ENCODE measurements at regions of chr11 and their contacts with region 1.

Region 1: GRCh38 chr11:107648242-107648641 is 57.3 kb downstream of the ELMOD1 start:
- DNase-seq: no peak
- H3K4me3 Mint-ChIP-seq: no peak overlapping the region
- H3K27ac Mint-ChIP-seq: no peak overlapping the region
- H3K4me1 Mint-ChIP-seq: no peaks in the 10 kb centered on the region
- H3K27me3 Mint-ChIP-seq: peaks cover 61% of the 10 kb centered on the region
- CTCF ChIP-seq: no peak

Region 2: GRCh38 chr11:107598225-107599139 is 49.8 kb before region 1 on chr11:
- CTCF ChIA-PET with region 1: interaction called, 3 read pairs
- POLR2A ChIA-PET with region 1: no interaction called
- intact Hi-C with region 1: loop called (anchors 5 kb)
- DNase-seq: peak; percentile 46
- H3K4me3 Mint-ChIP-seq: no peak overlapping the region
- H3K27ac Mint-ChIP-seq: no peak overlapping the region
- H3K4me1 Mint-ChIP-seq: no peaks in the 10 kb centered on the region
- H3K27me3 Mint-ChIP-seq: peaks cover 95% of the 10 kb centered on the region
- CTCF ChIP-seq: peak; percentile 30